ENCODE measurements at regions of chr6 and their contacts with region 1.

Region 1: DNA sequence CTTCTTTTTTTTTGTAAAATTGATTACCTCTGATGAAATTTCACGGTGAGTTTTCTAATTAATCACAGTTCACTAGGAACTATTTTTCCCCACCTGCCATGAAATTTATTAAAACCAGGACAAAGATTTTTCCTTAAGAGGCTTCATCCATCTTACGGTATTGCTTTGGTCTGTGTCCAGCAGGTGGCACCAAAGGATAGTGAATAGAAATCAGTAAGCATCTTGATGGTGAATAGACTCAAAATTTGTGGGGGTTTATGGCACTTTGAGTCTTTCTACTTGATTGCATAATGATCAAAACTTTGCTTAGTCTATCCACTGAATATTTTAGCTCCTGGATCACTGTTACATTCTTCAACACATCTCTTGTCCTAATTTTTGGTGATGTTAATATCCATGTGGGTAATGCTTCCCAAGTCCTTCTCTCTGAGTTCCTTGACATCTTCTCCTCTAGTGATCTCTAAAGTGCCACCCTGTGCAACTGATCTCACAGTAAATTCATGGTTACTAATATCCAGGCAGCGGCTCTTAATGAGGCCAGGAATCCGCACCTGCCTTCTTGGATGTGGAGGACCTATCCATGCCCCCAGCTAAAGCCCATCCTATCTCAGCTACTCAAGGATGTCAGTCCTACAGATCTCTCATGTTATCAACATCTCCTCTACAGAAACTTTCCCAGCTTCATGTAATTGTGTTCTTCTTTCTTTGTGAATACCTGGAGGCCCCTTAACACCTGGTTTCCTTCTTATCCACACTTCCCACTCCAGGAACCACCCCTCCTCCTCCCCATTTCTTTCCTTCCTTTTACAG is 54.5 kb downstream of the STMND1 start:
- DNase-seq: peak; percentile 83
- H3K4me3 ChIP-seq: no peak overlapping the region
- H3K27ac ChIP-seq: no peak overlapping the region
- H3K4me1 ChIP-seq: no peaks in the 10 kb centered on the region
- H3K27me3 ChIP-seq: no peaks in the 10 kb centered on the region
- CTCF ChIP-seq: peak; percentile 65 to 78 (median 71)
- EP300 ChIP-seq: no peak
- POLR2A ChIP-seq: no peak

Region 2: DNA sequence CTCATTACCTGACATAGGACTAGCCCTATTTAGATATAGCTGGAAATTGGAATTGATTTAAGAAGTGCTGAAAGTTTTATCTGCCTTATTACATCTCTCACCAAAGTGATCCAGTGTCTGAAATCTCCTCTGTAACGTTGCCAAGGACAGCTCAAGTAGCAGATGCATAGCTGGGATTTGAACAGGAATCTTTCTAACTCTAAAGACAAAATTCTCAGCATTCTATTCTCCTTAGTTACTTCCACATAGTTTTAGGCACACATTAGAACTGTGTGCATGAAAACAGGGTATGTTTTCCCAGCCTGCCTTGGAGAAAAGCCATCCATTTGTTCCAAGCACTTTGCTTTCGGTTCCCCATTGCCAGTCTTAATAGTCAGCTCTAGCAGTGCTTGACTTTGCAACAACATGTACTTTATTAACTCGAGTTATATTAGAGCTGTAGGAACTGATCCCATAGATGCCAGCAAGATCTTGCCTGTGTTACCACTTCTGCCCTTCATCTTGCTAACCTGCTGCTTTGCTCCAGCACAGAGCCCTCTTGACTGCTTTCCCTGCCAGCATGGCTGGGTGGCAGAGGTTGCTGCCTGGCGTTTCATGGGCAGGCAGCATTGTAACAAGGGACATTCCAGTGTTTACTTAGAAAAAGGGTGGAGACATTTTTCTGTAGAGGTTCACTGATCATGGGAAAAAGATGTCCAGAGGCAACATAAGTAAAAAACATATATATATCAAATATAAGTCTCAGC is 110.6 kb before region 1 on chr6:
- intact Hi-C with region 1: no loop called
- DNase-seq: no peak
- H3K4me3 ChIP-seq: peak overlapping the region in 1 of 4 donors; percentile 11
- H3K27ac ChIP-seq: peak overlapping the region; percentile 18 to 74 (median 48)
- H3K4me1 ChIP-seq: peaks cover 0 to 27% (median 13%) of the 10 kb centered on the region in 4 donors
- H3K27me3 ChIP-seq: no peaks in the 10 kb centered on the region
- CTCF ChIP-seq: no peak
- EP300 ChIP-seq: no peak
- POLR2A ChIP-seq: no peak

Region 3: GRCh38 chr6:17281100-17281494 is 124.8 kb after region 1 on chr6 and contains the start of gene RBM24:
- intact Hi-C with region 1: loop called (anchors 5 kb)
- DNase-seq: peak; percentile 88
- H3K4me3 ChIP-seq: peak within 1 kb of the TSS; percentile 80 to 93 (median 89)
- H3K27ac ChIP-seq: peak within 1 kb of the TSS; percentile 92 to 95 (median 94)
- H3K4me1 ChIP-seq: peaks cover 0 to 77% (median 37%) of the 10 kb centered on the region in 4 donors
- H3K27me3 ChIP-seq: no peaks in the 10 kb centered on the region
- CTCF ChIP-seq: peak in 3 of 4 experiments; percentile 20 to 26 (median 25)
- EP300 ChIP-seq: no peak
- POLR2A ChIP-seq: no peak
- total RNA-seq, gene RBM24: 8.3 to 34.1 (median 15.1) TPM

Region 4: DNA sequence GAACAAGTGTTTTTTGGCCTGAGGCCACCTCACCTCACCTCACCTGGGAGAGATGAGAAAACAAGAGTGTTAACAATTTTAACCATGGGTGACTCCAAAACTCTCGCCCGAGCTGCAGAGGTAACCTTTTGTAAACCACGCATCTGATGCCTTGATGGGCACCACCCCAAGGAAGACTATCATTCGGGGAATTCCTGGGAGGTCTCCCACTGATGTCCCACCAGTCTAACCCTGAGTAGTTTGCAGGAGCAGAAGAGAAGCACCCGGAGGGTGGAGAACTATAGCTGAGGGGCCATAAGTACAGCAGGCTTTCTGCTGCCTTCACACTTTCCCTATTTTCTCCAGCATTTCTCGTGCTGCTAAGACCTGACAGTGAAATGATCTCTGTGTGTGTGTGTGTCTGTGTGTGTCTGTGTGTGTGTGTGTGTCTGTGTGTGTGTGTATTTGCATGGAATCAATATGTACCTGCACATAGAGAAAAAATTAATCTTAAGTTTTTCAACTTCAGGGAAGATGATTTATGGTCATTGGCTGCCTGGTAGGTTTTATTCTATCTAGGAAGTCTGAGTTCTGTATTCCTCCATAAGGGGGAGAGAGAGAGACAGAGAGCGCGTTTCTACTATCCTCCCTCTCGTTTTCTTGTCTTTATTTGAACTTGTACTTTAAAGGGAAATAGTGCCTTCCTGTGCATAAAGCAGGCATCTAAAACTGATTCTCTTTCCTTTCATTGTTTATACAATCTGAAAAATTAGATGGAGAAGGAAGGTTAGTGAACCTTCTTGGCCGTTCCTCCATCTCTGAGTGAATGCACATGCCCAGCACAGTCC is 312.9 kb after region 1 on chr6:
- intact Hi-C with region 1: loop called (anchors 5 kb)
- DNase-seq: no peak
- H3K4me3 ChIP-seq: no peak overlapping the region
- H3K27ac ChIP-seq: peak overlapping the region; percentile 73 to 87 (median 84)
- H3K4me1 ChIP-seq: peaks cover 0 to 69% (median 51%) of the 10 kb centered on the region in 4 donors
- H3K27me3 ChIP-seq: no peaks in the 10 kb centered on the region
- CTCF ChIP-seq: peak; percentile 52 to 72 (median 66)
- EP300 ChIP-seq: no peak
- POLR2A ChIP-seq: no peak

Region 5: GRCh38 chr6:17584241-17584803 is 428.0 kb after region 1 on chr6:
- intact Hi-C with region 1: loop called (anchors 1 kb)
- DNase-seq: peak; percentile 79
- H3K4me3 ChIP-seq: peak overlapping the region in 2 of 4 donors; percentile 1 to 15
- H3K27ac ChIP-seq: peak overlapping the region; percentile 74 to 92 (median 80)
- H3K4me1 ChIP-seq: peaks cover 0 to 18% (median 11%) of the 10 kb centered on the region in 4 donors
- H3K27me3 ChIP-seq: no peaks in the 10 kb centered on the region
- CTCF ChIP-seq: peak; percentile 85 to 92 (median 90)
- EP300 ChIP-seq: no peak
- POLR2A ChIP-seq: no peak

Region 6: GRCh38 chr6:17599885-17600526 is 443.7 kb after region 1 on chr6 and contains the start of gene FAM8A1:
- intact Hi-C with region 1: loop called (anchors 5 kb)
- DNase-seq: peak; percentile 98
- H3K4me3 ChIP-seq: peak within 1 kb of the TSS; percentile 82 to 100 (median 92)
- H3K27ac ChIP-seq: peak within 1 kb of the TSS; percentile 92 to 99 (median 96)
- H3K4me1 ChIP-seq: peaks cover 0 to 23% (median 17%) of the 10 kb centered on the region in 4 donors
- H3K27me3 ChIP-seq: no peaks in the 10 kb centered on the region
- CTCF ChIP-seq: peak; percentile 70 to 87 (median 78)
- EP300 ChIP-seq: peak in 1 of 4 donors; percentile 70
- POLR2A ChIP-seq: peak; percentile 62 to 82
- total RNA-seq, gene FAM8A1: 39.0 to 70.4 (median 51.8) TPM

Region 7: DNA sequence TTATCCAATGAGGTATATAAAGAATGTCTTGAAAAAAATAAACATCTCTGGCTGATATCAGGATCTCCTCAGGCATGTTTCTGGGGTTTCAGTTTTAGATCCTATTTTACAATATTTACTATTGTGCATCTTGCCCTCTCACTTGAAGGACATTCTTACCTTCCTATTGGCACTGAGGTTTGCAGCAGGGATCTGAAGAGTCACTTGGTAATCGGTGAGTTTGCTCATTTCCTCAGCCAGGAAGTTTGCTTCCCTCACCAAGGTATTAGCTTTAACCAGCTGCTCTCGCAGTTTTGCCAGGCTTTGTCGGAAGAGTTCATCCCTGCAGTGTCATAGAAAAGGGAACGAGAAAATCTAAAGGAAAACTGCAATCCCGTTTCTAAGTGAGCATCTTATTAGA is 652.3 kb after region 1 on chr6:
- intact Hi-C with region 1: loop called (anchors 2 kb)
- DNase-seq: no peak
- H3K4me3 ChIP-seq: no peak overlapping the region
- H3K27ac ChIP-seq: no peak overlapping the region
- H3K4me1 ChIP-seq: no peaks in the 10 kb centered on the region
- H3K27me3 ChIP-seq: no peaks in the 10 kb centered on the region
- CTCF ChIP-seq: no peak
- EP300 ChIP-seq: no peak
- POLR2A ChIP-seq: no peak

Region 8: DNA sequence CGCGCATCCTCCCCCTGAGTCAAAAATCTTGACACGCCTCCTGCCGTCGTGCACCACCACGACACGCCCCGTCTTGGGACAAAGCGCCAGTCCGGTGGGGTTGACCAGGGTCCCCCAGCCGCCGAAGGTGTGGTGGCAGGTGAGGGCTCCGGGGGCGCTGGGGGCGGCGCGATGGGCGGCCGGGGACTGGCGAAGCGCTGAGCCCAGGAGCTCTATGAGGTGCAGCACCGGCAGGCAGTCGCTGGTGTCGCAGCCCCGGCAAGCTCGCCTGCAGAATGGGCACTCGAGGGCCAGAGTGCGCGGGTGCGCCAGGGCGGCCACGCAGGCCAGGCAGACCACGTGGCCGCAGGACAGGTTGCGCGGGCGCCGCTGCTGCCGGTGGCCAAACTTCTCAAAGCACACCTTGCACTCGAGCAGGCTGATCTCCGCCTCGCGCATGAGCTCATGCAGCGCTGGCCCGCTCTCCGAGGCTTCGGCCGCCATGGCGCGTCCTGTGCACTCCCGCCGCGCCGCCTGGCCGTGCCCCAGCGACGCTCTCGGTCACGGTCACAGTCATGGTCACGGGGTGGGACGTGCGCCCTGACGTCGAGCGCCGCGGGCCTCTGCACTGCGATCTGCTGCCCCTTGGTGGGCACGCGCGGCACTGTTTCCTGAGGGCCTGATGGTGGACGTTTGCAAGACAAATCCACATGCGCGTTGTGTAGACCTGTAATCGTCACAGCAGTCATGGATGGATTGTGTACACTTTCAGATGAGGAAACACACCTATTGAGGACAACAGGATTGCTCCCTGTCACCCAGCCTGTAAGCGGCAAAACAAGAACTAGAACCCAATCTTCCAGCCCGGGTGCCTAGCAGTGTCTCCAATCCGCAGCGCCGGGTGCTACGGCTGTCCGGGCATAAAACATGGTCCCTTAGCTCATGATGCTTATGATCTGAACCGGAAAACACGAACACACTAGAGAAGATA is 966.1 kb after region 1 on chr6 and contains the start of gene NHLRC1:
- intact Hi-C with region 1: loop called (anchors 10 kb)
- DNase-seq: peak; percentile 95
- H3K4me3 ChIP-seq: peak within 1 kb of the TSS; percentile 44 to 61 (median 52)
- H3K27ac ChIP-seq: peak within 1 kb of the TSS; percentile 42 to 62 (median 52)
- H3K4me1 ChIP-seq: peaks cover 0 to 13% (median 10%) of the 10 kb centered on the region in 4 donors
- H3K27me3 ChIP-seq: no peaks in the 10 kb centered on the region
- CTCF ChIP-seq: peak; percentile 85 to 97 (median 94)
- EP300 ChIP-seq: no peak
- POLR2A ChIP-seq: peak in 1 of 2 donors; percentile 25
- total RNA-seq, gene NHLRC1: 1.2 to 1.9 (median 1.5) TPM

Measured in sigmoid colon (tissue), 7 donors.